Dorsolateral prefrontal cortex (tissue), 120 donors: ENCODE measurements at regions of chr4 and their contacts with region 1.

Region 1: DNA sequence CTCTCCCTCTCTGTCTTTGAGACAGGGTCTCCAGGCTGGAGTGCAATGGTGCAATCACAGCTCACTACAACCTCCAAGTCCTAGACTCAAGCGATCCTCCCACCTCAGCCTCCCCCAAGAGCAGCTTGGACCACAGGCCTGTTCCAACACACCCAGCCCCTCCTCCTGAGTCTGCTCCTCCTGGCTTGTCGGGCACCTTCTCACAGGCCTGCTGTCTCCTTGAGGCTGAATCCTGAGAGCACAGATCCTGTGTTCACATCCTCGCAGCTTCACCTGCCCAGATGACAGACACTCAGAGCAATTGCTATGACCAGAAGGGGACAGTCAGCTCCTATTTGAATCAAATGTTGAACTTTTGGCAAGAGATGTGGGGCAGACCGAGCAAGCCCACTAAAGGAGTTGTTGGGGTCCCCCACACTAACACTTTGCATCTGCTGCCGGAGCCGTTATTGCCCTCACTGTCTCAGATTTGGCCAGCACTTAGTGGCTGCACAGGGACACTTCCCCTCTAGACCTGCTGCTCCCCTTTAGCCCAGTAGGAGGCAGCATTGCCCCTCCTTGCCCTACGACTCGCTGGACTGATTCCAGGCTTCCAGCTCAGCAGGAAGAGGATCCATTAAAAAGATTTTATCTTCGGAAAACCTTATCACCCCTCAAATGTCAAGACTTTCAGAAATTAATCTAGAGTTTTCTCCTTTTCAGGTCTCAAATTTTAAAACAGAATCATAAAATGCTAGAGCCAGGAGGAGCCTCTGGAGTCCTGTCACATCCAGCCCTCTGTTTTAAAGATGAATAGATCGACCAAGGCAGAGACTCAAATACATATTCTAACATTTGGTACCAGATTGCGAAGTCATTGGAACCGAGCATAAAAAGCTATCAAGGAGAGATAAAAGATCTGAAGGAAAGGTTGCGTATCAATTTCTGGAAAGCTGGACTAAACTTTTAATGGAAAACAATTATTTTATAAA is 113.7 kb downstream of the USP46 start:
- DNase-seq: peak in 8 of 10 donors; percentile 30 to 74 (median 58)
- H3K4me3 ChIP-seq: peak overlapping the region in 7 of 59 donors; percentile 7 to 37 (median 35)
- H3K27ac ChIP-seq: no peak overlapping the region
- H3K27me3 ChIP-seq: peaks cover 0 to under 1% (median 0%) of the 10 kb centered on the region in 45 donors
- CTCF ChIP-seq: peak; percentile 33 to 93 (median 83)

Region 2: GRCh38 chr4:52376132-52376704 is 169.2 kb before region 1 on chr4:
- intact Hi-C with region 1: loop called in 1 of 2 experiments (anchors 10 kb)
- DNase-seq: peak in 1 of 10 donors; percentile 14
- H3K4me3 ChIP-seq: peak overlapping the region in 1 of 59 donors; percentile 4
- H3K27ac ChIP-seq: no peak overlapping the region
- H3K27me3 ChIP-seq: no peaks in the 10 kb centered on the region
- CTCF ChIP-seq: peak; percentile 56 to 88 (median 72)

Region 3: DNA sequence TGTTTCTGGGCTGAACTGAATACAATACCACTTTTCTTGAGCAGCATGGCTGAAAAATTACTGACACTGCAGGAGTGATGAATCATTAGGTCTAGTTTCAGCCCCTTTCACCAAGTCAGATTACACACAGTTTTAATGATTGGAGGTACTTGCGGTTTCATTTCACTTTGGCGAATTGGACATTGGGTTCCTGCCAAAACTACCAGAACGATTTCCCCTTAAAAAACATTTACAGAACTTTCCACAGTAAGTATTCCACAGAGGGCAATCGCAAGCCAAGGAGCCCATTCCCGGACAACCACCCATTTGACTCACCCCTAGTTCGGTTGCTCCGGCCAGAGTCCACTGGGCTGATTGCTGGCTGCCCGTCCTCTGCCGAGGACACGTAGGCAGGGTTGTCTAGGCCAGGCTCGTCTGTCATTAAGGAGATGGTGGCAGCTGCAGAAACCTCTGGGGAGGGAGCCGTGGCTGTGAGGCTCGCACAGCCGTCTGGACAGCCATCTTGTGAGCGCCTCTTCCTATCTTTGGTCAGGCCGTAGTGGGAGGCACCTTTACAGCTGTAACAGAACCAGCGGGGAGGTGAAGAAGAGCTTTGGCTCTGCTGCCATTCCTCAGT is 962.4 kb after region 1 on chr4:
- intact Hi-C with region 1: no loop called
- DNase-seq: no peak
- H3K4me3 ChIP-seq: peak overlapping the region in 5 of 59 donors; percentile 2 to 31 (median 6)
- H3K27ac ChIP-seq: peak overlapping the region in 7 of 59 donors; percentile 3 to 48 (median 15)
- H3K27me3 ChIP-seq: no peaks in the 10 kb centered on the region
- CTCF ChIP-seq: no peak